Activated CD4-positive, alpha-beta memory T cell treated with anti-CD3 and anti-CD28 coated beads, Interleukin-2, amount 10 ng/mL, durations not matched to agents 7 days and 5 days (primary cell): ENCODE measurements at regions of chr17 and their contacts with region 1.

Region 1: DNA sequence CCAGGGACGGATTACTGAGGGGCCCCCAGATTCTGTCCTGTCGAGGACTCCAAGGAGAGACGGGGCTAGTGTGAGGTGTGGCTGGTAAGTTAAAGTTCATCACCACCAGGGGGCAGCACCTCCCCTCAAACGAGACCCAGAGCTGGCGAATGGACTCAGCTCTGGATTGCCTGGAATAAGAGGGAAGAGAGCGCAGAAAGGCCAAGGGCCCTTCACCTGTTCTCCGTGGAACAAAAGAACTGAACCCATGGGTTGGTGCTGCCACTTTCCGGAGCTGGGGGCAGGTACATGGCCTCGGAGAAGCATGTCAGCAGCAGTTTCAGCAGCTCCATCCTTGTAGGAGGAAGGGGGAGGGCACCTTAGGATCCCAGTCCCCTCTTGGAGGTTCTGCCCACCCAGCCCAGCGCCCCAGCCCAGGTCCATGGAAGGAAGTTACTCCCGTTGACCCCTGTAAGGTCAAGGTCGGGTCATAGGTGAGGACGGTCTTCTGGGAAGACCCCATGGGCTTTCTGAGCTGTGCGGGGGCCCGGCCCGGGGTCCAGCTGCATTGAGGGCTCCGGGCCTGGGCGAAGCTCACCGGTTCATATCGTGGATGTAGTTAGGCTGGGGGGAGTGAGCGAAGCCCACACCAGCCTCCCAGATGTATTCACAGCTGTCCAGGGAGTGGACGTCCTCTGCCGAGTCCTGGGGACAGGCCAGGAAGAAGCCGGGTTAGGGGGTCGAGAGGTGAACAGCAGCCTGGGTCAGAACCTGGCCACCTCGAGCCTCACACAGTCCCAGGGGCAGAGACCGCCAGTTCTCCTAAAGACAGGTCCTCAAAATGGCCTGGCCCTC is 10.7 kb downstream of the HID1 start:
- DNase-seq: peak; percentile 86
- H3K4me3 Mint-ChIP-seq: no peak overlapping the region
- H3K27ac Mint-ChIP-seq: no peak overlapping the region
- H3K4me1 Mint-ChIP-seq: peaks cover 7% of the 10 kb centered on the region
- H3K27me3 Mint-ChIP-seq: peaks cover 5% of the 10 kb centered on the region

Region 2: GRCh38 chr17:74858672-74859458 is 103.0 kb before region 1 on chr17:
- CTCF ChIA-PET with region 1: no interaction called
- POLR2A ChIA-PET with region 1: no interaction called
- DNase-seq: no peak
- H3K4me3 Mint-ChIP-seq: no peak overlapping the region
- H3K27ac Mint-ChIP-seq: no peak overlapping the region
- H3K4me1 Mint-ChIP-seq: peaks cover 14% of the 10 kb centered on the region
- H3K27me3 Mint-ChIP-seq: peaks cover 68% of the 10 kb centered on the region

Region 3: DNA sequence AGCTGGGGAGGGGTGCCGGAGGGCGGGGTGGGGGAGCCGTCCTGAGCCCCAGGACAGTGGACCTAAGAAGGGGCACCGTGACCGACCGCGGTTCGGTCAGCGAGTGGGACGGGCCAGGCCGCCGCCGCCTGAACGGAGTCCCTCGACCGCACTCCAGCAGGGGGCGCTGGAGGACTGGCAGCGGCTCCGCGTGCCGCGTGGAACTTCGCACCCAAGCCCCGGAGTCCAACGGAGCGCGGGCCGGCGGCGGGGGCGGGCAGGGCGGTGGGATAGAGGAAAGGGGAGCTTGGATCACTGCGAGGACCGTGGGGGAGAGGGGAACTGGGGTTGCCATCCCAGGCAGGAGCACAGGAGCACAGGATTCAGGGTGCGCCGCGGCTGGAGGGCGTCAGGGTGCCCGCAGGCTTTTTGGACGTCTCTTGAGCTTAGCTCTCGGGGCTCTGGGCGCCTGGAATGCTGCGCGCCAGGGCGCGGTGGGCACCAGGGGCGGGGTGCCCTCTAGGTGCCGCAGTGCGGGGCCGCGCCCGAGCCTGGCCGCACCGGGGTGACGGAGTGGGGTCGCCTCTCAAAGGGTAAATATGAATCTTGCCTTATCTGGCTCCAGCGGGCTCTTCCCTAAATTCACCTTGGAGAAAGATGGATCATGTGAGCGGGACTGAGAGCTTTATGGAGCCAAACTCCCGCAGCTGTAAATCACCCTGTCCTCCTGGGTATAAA is 38.2 kb before region 1 on chr17:
- CTCF ChIA-PET with region 1: interaction called, 20 read pairs
- POLR2A ChIA-PET with region 1: interaction called, 3 read pairs
- DNase-seq: peak; percentile 74
- H3K4me3 Mint-ChIP-seq: no peak overlapping the region
- H3K27ac Mint-ChIP-seq: no peak overlapping the region
- H3K4me1 Mint-ChIP-seq: peaks cover 3% of the 10 kb centered on the region
- H3K27me3 Mint-ChIP-seq: peaks cover 57% of the 10 kb centered on the region

Region 4: GRCh38 chr17:74987418-74987908 is 25.6 kb after region 1 on chr17 and contains the start of gene CDR2L:
- CTCF ChIA-PET with region 1: interaction called, 31 read pairs
- POLR2A ChIA-PET with region 1: no interaction called
- DNase-seq: peak; percentile 91
- H3K4me3 Mint-ChIP-seq: peak within 1 kb of the TSS; percentile 70
- H3K27ac Mint-ChIP-seq: peak within 1 kb of the TSS; percentile 7
- H3K4me1 Mint-ChIP-seq: peaks cover 21% of the 10 kb centered on the region
- H3K27me3 Mint-ChIP-seq: peaks cover 34% of the 10 kb centered on the region
- total RNA-seq, gene CDR2L: 0.50 to 0.63 TPM

Region 5: GRCh38 chr17:75012346-75013091 is 50.6 kb after region 1 on chr17 and contains the start of gene MRPL58:
- CTCF ChIA-PET with region 1: interaction called, 65 read pairs
- POLR2A ChIA-PET with region 1: interaction called, 23 read pairs
- DNase-seq: peak; percentile 86
- H3K4me3 Mint-ChIP-seq: peak within 1 kb of the TSS; percentile 93
- H3K27ac Mint-ChIP-seq: peak within 1 kb of the TSS; percentile 84
- H3K4me1 Mint-ChIP-seq: peaks cover 30% of the 10 kb centered on the region
- H3K27me3 Mint-ChIP-seq: no peaks in the 10 kb centered on the region
- total RNA-seq, gene MRPL58: 45.4 to 49.6 TPM

Region 6: GRCh38 chr17:75046582-75047289 is 84.9 kb after region 1 on chr17 and contains the starts of genes ATP5PD and KCTD2:
- CTCF ChIA-PET with region 1: interaction called, 19 read pairs
- POLR2A ChIA-PET with region 1: interaction called, 3 read pairs
- DNase-seq: peak; percentile 96
- H3K4me3 Mint-ChIP-seq: peak within 1 kb of the TSS; percentile 96
- H3K27ac Mint-ChIP-seq: peak within 1 kb of the TSS; percentile 91
- H3K4me1 Mint-ChIP-seq: peaks cover 45% of the 10 kb centered on the region
- H3K27me3 Mint-ChIP-seq: no peaks in the 10 kb centered on the region
- total RNA-seq, gene ATP5PD: 242 TPM
- total RNA-seq, gene KCTD2: 24.2 to 24.9 TPM

Region 7: GRCh38 chr17:75205037-75205792 is 243.3 kb after region 1 on chr17 and contains the start of gene NUP85:
- CTCF ChIA-PET with region 1: interaction called, 87 read pairs
- POLR2A ChIA-PET with region 1: interaction called, 8 read pairs
- DNase-seq: peak; percentile 91
- H3K4me3 Mint-ChIP-seq: peak within 1 kb of the TSS; percentile 86
- H3K27ac Mint-ChIP-seq: peak within 1 kb of the TSS; percentile 97
- H3K4me1 Mint-ChIP-seq: peaks cover 36% of the 10 kb centered on the region
- H3K27me3 Mint-ChIP-seq: no peaks in the 10 kb centered on the region
- total RNA-seq, gene NUP85: 109 to 116 TPM